Activated naive CD4-positive, alpha-beta T cell treated with anti-CD3 and anti-CD28 coated beads for 36 hours (primary cell): ENCODE measurements at regions of chr10 and their contacts with region 1.

Region 1: DNA sequence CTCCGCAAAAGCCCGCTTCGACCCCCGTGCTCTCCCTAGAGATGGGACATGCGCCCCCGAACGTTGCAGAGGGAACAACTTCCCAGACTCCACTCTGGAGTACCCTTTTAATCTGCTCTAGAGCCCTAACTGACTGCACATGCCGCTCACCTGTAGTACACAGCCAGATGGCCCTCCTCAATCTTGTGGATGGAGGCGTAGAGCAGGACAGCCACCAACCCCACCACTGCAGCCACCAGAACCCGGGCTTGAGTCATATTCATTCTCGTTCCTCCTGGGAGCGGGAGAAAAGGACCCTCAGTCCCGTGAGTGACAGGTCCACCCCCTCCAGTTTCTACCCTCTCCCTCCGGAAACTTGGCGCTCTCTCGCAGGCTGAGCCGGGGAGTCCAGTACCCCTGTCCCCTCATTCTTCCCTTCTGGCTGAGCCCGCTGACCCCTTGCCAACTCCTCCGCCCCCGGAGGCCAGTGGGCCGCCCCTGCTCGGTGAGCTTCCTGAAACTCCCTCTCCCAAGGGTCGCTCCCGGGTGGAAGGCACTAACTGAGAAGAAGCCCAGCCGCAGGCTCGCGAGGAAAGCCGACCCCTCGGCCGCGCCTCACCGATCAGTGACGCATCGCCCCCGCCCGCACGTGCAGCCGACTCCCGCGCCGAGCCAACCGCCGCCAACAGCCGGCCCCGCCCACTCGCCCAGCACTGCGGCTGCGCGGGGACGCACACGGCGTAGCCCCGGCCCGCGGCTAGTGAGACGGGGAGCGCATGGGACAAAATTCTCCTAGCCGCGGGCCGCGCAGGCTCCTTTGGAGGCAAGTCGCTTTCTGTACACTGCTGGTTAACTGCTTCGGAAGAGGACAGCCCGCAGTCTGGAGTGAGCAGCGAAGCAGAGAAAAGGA is at the start of gene ERLIN1:
- DNase-seq: peak; percentile 95
- H3K4me3 Mint-ChIP-seq: peak within 1 kb of the TSS; percentile 96
- H3K27ac Mint-ChIP-seq: peak within 1 kb of the TSS; percentile 95
- H3K4me1 Mint-ChIP-seq: peaks cover 58% of the 10 kb centered on the region
- H3K27me3 Mint-ChIP-seq: no peaks in the 10 kb centered on the region
- total RNA-seq, gene ERLIN1: 18.4 to 18.7 TPM

Region 2: DNA sequence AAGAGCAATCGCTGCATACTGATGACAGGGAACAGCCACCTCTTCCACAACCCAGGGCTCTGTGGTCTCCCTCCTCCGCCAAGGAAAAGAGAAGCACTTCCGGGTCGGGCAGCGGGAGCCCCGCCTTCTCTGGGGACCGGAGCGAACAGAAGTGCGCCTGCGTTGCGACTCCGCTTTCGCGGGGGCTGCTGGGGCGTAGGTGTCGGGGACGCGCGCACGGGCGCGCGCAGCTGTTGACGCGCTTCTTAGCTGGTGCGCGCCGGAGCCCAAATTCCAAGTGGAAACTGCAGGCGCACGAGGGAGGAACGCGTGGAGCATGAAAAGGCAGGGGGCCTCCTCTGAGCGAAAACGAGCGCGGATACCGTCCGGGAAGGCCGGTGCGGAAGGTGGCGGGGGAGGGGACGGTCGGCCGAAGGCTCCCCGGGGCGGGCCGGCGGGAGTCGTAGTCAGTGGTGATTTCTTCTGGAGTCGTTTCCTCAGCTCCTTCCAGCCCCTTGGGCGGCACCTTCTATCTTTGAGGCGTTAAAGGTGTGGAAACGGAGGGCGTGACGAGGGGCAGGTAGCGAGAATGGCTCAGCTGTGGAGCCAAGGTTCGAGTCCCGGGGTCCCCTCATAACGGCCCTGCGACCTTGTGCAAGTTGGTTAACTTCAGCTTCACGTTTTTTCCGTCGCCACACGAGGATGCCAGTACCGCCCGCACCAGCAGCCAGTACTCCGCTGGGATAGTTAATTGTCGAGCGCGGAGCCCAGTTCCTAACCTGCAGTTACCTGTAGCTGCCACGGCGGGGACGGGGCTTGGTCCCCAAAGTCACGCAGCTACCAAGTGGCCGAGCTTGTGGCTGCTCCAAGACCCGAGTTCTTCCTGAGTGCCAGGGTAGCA is 453.3 kb before region 1 on chr10 and contains the starts of genes COX15 and CUTC:
- CTCF ChIA-PET with region 1: no interaction called
- intact Hi-C with region 1: loop called (anchors 5 kb)
- DNase-seq: peak; percentile 96
- H3K4me3 Mint-ChIP-seq: peak within 1 kb of the TSS; percentile 99
- H3K27ac Mint-ChIP-seq: peak within 1 kb of the TSS; percentile 96
- H3K4me1 Mint-ChIP-seq: peaks cover 32% of the 10 kb centered on the region
- H3K27me3 Mint-ChIP-seq: no peaks in the 10 kb centered on the region
- total RNA-seq, gene COX15: 36.3 to 38.8 TPM
- total RNA-seq, gene CUTC: 21.6 to 21.9 TPM

Region 3: DNA sequence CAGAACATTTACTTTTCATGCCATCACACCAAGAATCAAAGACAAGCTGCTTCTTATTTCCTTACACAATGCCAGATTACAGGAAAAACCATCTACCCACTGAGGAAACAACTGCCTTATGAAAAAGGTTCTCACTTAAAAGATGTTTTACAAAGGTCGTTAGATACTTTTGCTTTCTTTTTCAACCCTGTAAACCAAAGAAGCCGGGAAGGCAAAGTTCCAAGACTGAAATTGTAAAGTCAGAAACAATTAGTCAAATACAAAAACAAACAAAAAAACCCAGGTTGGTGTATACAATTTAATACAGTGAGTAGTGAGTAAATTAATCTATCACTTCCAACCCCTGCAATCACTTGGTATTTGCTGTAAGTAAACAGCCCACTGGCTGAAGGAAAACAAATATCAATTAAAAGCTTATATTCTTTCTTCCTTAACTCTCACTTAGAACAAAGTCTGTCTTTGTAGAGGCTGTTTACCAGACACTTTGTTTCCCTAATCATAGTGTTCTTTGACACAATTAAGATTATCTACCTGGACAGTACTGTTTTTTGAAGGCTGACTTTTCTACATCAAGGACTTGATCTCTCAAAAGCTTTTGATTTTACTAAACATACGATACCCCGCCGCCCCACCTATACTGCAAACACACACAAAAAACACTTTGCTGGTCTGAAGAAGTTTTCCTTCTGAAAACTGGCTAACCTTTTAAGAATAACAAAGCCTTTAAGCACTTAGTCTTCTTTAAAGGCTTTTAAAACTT is 17.9 kb before region 1 on chr10:
- CTCF ChIA-PET with region 1: interaction called, 5 read pairs
- intact Hi-C with region 1: loop called (anchors 2 kb)
- DNase-seq: no peak
- H3K4me3 Mint-ChIP-seq: peak overlapping the region; percentile 10
- H3K27ac Mint-ChIP-seq: peak overlapping the region; percentile 46
- H3K4me1 Mint-ChIP-seq: peaks cover 59% of the 10 kb centered on the region
- H3K27me3 Mint-ChIP-seq: no peaks in the 10 kb centered on the region

Region 4: DNA sequence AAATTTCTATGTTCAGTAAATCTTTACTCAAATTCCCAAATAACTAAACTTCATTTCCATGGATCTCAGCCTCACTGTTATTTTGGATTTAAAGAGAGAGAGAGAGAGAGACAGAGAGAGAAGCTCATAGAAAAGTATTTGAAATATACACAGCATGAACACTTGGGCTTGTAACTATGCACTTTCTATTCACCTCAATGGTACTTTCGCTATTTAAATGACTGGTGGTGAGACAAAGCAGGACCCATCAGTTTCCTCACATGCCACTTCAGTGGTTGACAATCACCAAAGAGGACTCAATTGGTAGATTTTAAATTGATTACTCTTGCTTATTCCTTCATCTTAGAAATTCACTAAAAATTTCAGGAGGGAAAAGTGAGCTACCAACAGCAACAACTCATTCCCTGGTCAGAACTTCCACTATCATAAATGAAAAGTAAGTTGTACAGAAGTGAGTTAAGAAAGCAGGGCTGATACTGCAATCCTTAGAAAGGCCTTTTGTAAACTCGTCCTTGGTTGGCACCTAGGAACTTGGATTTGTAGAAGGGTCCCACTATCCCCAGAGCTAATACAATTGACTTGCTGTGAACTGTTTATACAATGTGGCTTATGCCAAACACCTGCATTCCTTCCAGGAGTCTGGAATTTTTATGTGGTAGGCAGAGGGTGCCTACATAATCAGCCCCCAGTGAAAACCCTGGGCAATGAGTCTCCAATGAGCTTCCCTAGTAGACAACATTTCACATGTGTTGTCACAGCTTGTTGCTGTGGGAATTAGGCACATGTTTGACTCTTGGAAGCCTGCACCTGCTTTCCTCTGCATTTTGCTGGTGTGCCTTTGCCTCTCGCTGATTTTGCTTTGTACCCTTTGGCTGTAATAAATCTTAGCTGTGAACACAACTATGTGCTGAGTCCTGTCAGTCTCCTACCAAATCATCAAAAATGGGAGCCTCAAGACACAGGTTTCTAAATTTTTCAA is 10.6 kb before region 1 on chr10:
- CTCF ChIA-PET with region 1: interaction called, 5 read pairs
- intact Hi-C with region 1: loop called (anchors 1 kb)
- DNase-seq: peak; percentile 32
- H3K4me3 Mint-ChIP-seq: no peak overlapping the region
- H3K27ac Mint-ChIP-seq: peak overlapping the region; percentile 72
- H3K4me1 Mint-ChIP-seq: peaks cover 48% of the 10 kb centered on the region
- H3K27me3 Mint-ChIP-seq: no peaks in the 10 kb centered on the region

Region 5: GRCh38 chr10:100229819-100230422 is 44.3 kb after region 1 on chr10:
- CTCF ChIA-PET with region 1: no interaction called
- intact Hi-C with region 1: loop called (anchors 1 kb)
- DNase-seq: no peak
- H3K4me3 Mint-ChIP-seq: peak overlapping the region; percentile 91
- H3K27ac Mint-ChIP-seq: peak overlapping the region; percentile 90
- H3K4me1 Mint-ChIP-seq: peaks cover 31% of the 10 kb centered on the region
- H3K27me3 Mint-ChIP-seq: no peaks in the 10 kb centered on the region

Region 6: DNA sequence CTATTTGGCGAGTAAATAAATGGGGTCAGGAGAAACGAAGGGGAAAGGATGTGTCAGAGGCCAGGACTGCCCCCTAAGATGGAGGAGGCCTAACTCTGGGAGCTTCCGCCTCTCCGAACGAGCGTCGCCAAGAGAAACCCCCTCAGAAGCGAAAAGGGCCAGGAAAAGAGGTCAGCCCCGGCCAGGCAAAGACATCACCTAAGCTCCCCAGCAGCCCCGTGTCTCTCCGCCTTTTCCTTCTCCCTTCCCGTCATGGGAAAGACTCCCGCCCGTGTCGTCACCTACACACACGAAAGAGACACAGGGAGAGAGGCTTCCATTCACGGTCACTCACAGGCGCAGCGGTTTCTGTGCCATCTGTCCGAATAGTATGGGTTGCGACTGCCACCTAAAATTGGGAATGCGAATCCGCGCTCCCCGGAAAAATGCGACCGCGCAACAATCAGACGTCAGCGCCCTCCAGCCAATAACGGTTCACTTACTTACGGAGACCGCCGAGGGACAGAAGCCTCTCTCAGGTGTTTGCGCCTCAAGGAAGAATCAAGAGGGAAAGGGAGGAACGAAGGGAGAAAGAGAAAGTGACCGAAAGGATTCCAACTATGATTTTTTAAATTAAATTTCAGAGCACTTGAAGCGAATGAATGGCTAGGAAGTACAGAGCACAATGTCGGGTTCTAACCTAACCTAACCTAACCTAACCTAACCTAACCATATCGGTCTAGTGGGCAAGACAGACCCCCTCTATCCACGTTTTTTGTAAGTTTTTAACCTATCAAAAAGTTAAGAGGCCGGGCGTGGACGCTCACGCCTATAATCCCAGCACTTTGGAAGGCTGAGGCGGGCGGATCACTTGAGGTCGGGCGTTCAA is 81.9 kb after region 1 on chr10 and contains the start of gene CWF19L1:
- CTCF ChIA-PET with region 1: no interaction called
- intact Hi-C with region 1: loop called (anchors 1 kb)
- DNase-seq: peak; percentile 90
- H3K4me3 Mint-ChIP-seq: peak within 1 kb of the TSS; percentile 100
- H3K27ac Mint-ChIP-seq: peak within 1 kb of the TSS; percentile 97
- H3K4me1 Mint-ChIP-seq: peaks cover 29% of the 10 kb centered on the region
- H3K27me3 Mint-ChIP-seq: no peaks in the 10 kb centered on the region
- total RNA-seq, gene CWF19L1: 35.3 to 35.4 TPM

Region 7: GRCh38 chr10:100286051-100287033 is 100.7 kb after region 1 on chr10 and contains the start of gene BLOC1S2:
- CTCF ChIA-PET with region 1: no interaction called
- intact Hi-C with region 1: loop called (anchors 1 kb)
- DNase-seq: peak; percentile 87
- H3K4me3 Mint-ChIP-seq: peak within 1 kb of the TSS; percentile 99
- H3K27ac Mint-ChIP-seq: peak within 1 kb of the TSS; percentile 98
- H3K4me1 Mint-ChIP-seq: peaks cover 25% of the 10 kb centered on the region
- H3K27me3 Mint-ChIP-seq: no peaks in the 10 kb centered on the region
- total RNA-seq, gene BLOC1S2: 68.5 to 69.1 TPM